ENCODE measurements at regions of chr9 and their contacts with region 1.

Region 1: DNA sequence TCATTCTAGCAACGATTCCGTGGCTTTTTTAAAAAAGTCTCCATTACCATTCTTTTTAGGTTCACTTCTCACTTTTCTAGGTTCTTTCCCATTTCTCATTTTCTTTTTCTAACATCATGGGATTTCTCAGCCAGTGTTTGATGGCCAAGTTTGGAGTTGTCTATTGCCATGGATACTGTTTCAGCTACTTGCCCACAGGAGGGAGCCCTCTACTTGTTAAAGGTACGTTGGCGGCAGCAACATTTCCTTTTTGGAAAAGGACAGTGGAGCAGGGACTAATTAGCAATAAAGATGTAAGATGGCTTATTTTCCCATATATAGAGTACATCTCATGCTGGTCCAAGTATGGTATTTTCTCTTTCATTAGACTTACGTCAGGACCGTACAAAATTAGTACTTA is 2257.5 kb upstream of the C9orf72 start:
- DNase-seq: peak; percentile 77
- H3K4me3 ChIP-seq: no peak overlapping the region
- H3K27ac ChIP-seq: no peak overlapping the region
- H3K4me1 ChIP-seq: no peaks in the 10 kb centered on the region
- H3K27me3 ChIP-seq: no peaks in the 10 kb centered on the region
- CTCF ChIP-seq: peak; percentile 79

Region 2: GRCh38 chr9:29548436-29548835 is 282.4 kb before region 1 on chr9:
- CTCF ChIA-PET with region 1: no interaction called
- POLR2A ChIA-PET with region 1: no interaction called
- intact Hi-C with region 1: loop called (anchors 10 kb)
- DNase-seq: no peak
- H3K4me3 ChIP-seq: no peak overlapping the region
- H3K27ac ChIP-seq: no peak overlapping the region
- H3K4me1 ChIP-seq: no peaks in the 10 kb centered on the region
- H3K27me3 ChIP-seq: no peaks in the 10 kb centered on the region
- CTCF ChIP-seq: no peak

Region 3: DNA sequence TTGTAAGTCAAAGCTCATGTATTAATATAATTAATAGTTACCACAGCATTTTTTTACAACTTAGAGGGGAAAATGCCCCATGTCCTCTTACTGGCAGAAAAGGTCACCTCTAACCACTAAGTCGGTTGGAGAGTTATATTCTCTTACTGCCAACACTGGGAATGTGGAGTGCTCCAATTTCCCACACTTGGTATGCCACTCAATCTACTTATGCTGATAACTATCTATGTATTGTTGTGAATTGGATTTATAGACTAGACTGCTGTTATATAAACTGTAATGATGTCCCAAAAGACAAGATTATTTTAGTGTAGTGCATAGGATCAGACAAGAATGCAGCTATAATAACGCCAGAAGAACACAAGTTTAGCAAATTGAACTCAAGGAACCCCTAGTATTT is 127.6 kb after region 1 on chr9:
- CTCF ChIA-PET with region 1: no interaction called
- POLR2A ChIA-PET with region 1: no interaction called
- intact Hi-C with region 1: loop called (anchors 5 kb)
- DNase-seq: peak; percentile 52
- H3K4me3 ChIP-seq: no peak overlapping the region
- H3K27ac ChIP-seq: no peak overlapping the region
- H3K4me1 ChIP-seq: no peaks in the 10 kb centered on the region
- H3K27me3 ChIP-seq: no peaks in the 10 kb centered on the region
- CTCF ChIP-seq: no peak

Region 4: DNA sequence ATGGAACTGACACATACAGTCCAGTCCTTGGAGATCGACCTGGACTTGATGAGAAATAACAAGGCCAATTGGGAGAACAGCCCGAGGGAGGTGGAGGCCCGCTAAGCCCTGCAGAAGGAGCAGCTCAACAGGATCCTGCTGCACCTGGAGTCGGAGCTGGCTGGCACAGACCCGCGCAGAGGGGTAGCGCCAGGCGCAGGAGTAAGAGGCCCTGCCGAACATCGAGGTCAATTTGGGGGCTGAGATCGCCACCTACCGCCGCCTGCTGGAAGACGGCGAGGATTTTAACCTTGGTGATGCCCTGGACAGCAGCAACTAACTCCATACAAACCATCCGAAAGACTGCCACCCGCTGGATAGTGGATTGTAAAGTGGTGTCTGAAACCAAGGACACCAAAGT is 943.5 kb after region 1 on chr9:
- CTCF ChIA-PET with region 1: no interaction called
- POLR2A ChIA-PET with region 1: no interaction called
- intact Hi-C with region 1: loop called (anchors 10 kb)
- DNase-seq: peak; percentile 4
- H3K4me3 ChIP-seq: no peak overlapping the region
- H3K27ac ChIP-seq: no peak overlapping the region
- H3K4me1 ChIP-seq: no peaks in the 10 kb centered on the region
- H3K27me3 ChIP-seq: no peaks in the 10 kb centered on the region
- CTCF ChIP-seq: 0 out of 2 replicates have a peak, but pooled peaks have one; percentile 12

Region 5: GRCh38 chr9:31799953-31800609 is 1969.3 kb after region 1 on chr9:
- CTCF ChIA-PET with region 1: no interaction called
- POLR2A ChIA-PET with region 1: no interaction called
- intact Hi-C with region 1: loop called (anchors 2 kb)
- DNase-seq: peak; percentile 76
- H3K4me3 ChIP-seq: no peak overlapping the region
- H3K27ac ChIP-seq: no peak overlapping the region
- H3K4me1 ChIP-seq: no peaks in the 10 kb centered on the region
- H3K27me3 ChIP-seq: no peaks in the 10 kb centered on the region
- CTCF ChIP-seq: peak; percentile 74

Measured in A673 (cell line).